CD4-positive, alpha-beta T cell (primary cell): ENCODE measurements at regions of chrX and their contacts with region 1.

Region 1: DNA sequence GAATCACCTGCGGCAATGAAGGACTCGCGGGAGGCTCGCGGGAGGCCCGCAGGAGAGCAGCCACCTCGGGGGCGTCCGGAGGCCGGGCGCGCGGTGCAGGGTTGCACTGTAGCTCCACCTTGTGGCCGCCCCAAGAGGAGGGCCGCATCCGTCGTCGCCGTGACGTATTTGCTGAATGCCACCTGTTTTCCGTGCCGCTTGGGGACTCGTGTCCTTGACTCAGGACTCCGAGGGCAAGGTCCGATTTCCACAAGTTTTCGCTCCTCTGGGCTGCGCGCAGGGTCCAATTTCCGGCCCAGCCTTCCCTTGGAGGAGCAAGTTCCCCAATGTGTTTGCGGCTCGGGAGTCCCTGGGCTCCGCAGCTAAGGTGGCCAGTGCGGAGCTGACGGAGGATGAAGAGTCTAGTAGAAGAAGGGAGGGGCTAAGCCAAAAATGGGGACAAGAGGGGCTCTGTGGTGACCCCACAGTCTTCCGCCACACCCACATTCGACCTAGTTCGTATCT is 10.7 kb upstream of the DLG3 start:
- DNase-seq: peak; percentile 58 to 88 (median 68)
- ATAC-seq: peak; percentile 81
- H3K4me3 ChIP-seq: peak overlapping the region; percentile 65
- H3K4me3 Mint-ChIP-seq: peak overlapping the region; percentile 95
- H3K27ac ChIP-seq: peak overlapping the region; percentile 13 to 51
- H3K27ac Mint-ChIP-seq: peak overlapping the region; percentile 93
- H3K4me1 ChIP-seq: peaks cover 20% of the 10 kb centered on the region
- H3K4me1 Mint-ChIP-seq: peaks cover 19% of the 10 kb centered on the region
- H3K27me3 ChIP-seq: no peaks in the 10 kb centered on the region
- H3K27me3 Mint-ChIP-seq: peaks cover 15% of the 10 kb centered on the region
- CTCF ChIP-seq: peak; percentile 69

Region 2: GRCh38 chrX:69538321-69538876 is 895.5 kb before region 1 on chrX:
- CTCF ChIA-PET with region 1: no interaction called
- POLR2A ChIA-PET with region 1: no interaction called
- intact Hi-C with region 1: loop called in 1 of 2 experiments (anchors 10 kb)
- DNase-seq: peak; percentile 29 to 79 (median 70)
- ATAC-seq: peak; percentile 71
- H3K4me3 ChIP-seq: peak overlapping the region; percentile 46
- H3K4me3 Mint-ChIP-seq: no peak overlapping the region
- H3K27ac ChIP-seq: no peak overlapping the region
- H3K27ac Mint-ChIP-seq: no peak overlapping the region
- H3K4me1 ChIP-seq: peaks cover 15% of the 10 kb centered on the region
- H3K4me1 Mint-ChIP-seq: peaks cover 7% of the 10 kb centered on the region
- H3K27me3 ChIP-seq: no peaks in the 10 kb centered on the region
- H3K27me3 Mint-ChIP-seq: peaks cover 12% of the 10 kb centered on the region
- CTCF ChIP-seq: peak; percentile 45

Region 3: DNA sequence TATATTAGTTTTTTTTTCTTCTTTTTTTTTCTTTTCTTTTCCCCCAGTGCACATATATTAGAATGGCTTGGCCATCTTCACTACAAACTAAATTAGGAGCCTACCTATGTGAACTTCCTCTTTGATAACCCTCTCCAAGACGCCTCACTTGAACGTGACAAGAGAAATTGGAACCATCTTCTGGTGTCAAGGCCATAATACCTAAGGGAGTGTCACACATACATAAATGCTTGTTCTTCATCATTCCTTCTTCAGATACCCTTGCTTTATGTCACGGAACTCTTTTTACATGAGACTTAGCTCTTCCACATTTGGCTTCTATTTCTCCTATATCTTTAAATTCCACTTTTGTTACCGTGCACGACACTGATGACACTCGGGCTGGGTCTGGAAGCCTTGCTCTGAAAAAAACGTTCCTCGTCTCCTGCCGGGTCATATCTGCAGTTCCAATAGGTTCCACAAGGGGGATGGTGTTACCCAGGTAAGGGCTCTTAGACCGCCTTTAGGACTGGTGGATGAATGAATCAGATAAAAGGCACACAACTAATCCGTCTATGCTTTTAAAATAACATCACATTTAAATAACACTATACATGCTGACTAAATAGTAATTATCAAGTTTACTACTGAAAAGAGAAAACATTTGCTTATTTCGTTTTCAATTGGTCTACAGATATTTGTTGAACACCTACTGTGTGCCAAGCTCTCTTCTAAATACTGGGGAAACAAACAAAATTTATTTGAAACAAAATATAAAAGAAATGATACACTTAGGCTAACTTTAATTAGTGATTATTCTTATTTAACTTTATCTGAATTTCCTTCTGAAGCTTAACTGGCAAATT is 236.7 kb before region 1 on chrX:
- CTCF ChIA-PET with region 1: interaction called, 6 read pairs
- POLR2A ChIA-PET with region 1: no interaction called
- intact Hi-C with region 1: loop called (anchors 1 kb)
- DNase-seq: peak; percentile 36 to 77 (median 53)
- ATAC-seq: peak; percentile 93
- H3K4me3 ChIP-seq: no peak overlapping the region
- H3K4me3 Mint-ChIP-seq: no peak overlapping the region
- H3K27ac ChIP-seq: no peak overlapping the region
- H3K27ac Mint-ChIP-seq: no peak overlapping the region
- H3K4me1 ChIP-seq: no peaks in the 10 kb centered on the region
- H3K4me1 Mint-ChIP-seq: no peaks in the 10 kb centered on the region
- H3K27me3 ChIP-seq: no peaks in the 10 kb centered on the region
- H3K27me3 Mint-ChIP-seq: no peaks in the 10 kb centered on the region
- CTCF ChIP-seq: peak; percentile 63

Region 4: DNA sequence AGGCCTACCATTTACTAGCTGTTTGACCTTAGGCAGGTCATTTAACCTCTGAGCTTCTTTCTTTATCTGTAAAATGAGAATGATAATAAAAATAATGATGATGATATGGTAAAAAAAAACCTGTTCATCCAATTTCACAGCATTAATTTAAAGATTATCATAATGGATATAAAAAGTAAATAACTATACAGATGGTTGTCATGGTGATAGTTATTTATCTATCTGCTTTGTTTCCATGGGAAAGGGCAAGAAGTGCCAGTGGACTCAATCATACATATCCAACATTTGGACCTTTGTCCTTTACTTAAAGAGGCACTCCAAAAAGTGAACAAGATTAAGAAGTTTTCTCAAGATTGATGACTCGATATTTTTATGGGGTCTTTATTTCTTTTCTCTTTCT is 105.0 kb before region 1 on chrX:
- CTCF ChIA-PET with region 1: no interaction called
- POLR2A ChIA-PET with region 1: no interaction called
- intact Hi-C with region 1: loop called (anchors 1 to 5 kb)
- DNase-seq: no peak
- ATAC-seq: no peak
- H3K4me3 ChIP-seq: no peak overlapping the region
- H3K4me3 Mint-ChIP-seq: no peak overlapping the region
- H3K27ac ChIP-seq: no peak overlapping the region
- H3K27ac Mint-ChIP-seq: no peak overlapping the region
- H3K4me1 ChIP-seq: no peaks in the 10 kb centered on the region
- H3K4me1 Mint-ChIP-seq: no peaks in the 10 kb centered on the region
- H3K27me3 ChIP-seq: no peaks in the 10 kb centered on the region
- H3K27me3 Mint-ChIP-seq: no peaks in the 10 kb centered on the region
- CTCF ChIP-seq: no peak

Region 5: GRCh38 chrX:70398899-70399298 is 35.0 kb before region 1 on chrX:
- CTCF ChIA-PET with region 1: no interaction called
- POLR2A ChIA-PET with region 1: interaction called, 10 read pairs
- intact Hi-C with region 1: no loop called
- DNase-seq: peak in 5 of 14 experiments; percentile 17 to 75 (median 61)
- ATAC-seq: peak; percentile 93
- H3K4me3 ChIP-seq: peak overlapping the region; percentile 12
- H3K4me3 Mint-ChIP-seq: peak overlapping the region; percentile 50
- H3K27ac ChIP-seq: peak overlapping the region; percentile 45 to 66
- H3K27ac Mint-ChIP-seq: peak overlapping the region; percentile 93
- H3K4me1 ChIP-seq: peaks cover 5% of the 10 kb centered on the region
- H3K4me1 Mint-ChIP-seq: peaks cover 16% of the 10 kb centered on the region
- H3K27me3 ChIP-seq: no peaks in the 10 kb centered on the region
- H3K27me3 Mint-ChIP-seq: no peaks in the 10 kb centered on the region
- CTCF ChIP-seq: no peak